Endothelial cell of umbilical vein (primary cell): ENCODE measurements at regions of chr11 and their contacts with region 1.

Region 1: DNA sequence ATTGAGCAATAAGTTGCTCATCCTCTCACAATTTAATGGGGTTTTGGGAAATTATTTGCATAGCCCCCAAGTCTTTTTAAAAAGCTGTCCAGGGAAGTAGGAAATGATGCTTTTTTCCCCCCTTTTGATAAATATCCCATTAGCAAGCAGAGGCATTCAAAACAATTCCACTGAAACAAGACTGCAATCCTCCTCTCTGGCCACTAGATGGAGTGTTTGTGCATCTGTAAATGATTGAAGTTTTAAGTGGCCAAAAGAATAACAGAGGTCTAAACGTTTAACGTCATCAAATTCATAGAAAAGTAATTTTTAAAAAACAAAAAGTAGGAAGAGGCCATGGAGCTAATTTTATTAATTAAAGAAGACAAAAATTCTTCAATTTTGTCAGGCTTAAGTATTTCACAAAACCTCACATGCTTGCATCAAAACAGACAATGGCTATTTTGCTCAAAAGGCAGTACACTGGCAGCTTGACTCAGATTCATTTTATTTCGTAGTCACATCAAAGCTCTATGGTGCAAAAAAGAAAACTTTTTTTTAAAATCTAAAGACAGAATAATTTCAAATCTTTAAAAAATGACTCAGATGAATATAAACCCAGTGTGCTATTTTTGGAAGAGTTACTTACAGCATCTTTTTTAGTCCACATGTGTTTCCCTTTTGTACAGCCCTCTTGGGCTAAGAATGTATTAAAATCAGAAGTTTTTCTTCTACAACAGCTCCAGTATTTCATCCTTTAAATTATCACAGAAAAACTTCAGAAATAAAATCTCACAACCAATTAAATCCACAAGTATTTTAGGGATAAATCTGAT is 17.8 kb downstream of the CHORDC1 start:
- DNase-seq: peak; percentile 68
- H3K4me3 ChIP-seq: no peak overlapping the region
- H3K27ac ChIP-seq: no peak overlapping the region
- H3K4me1 ChIP-seq: no peaks in the 10 kb centered on the region
- H3K27me3 ChIP-seq: no peaks in the 10 kb centered on the region
- CTCF ChIP-seq: peak; percentile 59 to 71
- POLR2A ChIP-seq: no peak

Region 2: DNA sequence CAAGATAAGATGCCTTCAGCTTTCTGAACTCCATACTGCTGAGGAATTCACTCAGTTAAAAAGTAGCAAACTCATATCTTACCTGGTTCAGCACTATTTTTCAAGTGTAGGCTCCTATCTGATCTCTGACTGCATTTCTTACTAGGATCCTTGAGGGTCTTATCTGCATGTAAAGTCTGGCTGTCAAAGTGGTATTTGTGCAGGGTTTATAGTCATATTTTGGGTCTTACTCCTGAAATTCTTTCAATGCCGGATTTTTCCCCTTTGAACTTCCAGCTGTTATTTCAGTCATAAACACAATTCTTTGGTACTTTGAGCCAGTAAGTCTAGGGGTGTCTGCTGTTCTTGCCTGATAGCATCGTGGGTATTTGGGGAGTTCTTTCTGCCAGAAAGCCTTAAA is 688.5 kb before region 1 on chr11:
- CTCF ChIA-PET with region 1: no interaction called
- POLR2A ChIA-PET with region 1: no interaction called
- dilution Hi-C with region 1: no loop called
- intact Hi-C with region 1: no loop called
- DNase-seq: no peak
- H3K4me3 ChIP-seq: no peak overlapping the region
- H3K27ac ChIP-seq: no peak overlapping the region
- H3K4me1 ChIP-seq: no peaks in the 10 kb centered on the region
- H3K27me3 ChIP-seq: no peaks in the 10 kb centered on the region
- CTCF ChIP-seq: no peak
- POLR2A ChIP-seq: no peak

Region 3: DNA sequence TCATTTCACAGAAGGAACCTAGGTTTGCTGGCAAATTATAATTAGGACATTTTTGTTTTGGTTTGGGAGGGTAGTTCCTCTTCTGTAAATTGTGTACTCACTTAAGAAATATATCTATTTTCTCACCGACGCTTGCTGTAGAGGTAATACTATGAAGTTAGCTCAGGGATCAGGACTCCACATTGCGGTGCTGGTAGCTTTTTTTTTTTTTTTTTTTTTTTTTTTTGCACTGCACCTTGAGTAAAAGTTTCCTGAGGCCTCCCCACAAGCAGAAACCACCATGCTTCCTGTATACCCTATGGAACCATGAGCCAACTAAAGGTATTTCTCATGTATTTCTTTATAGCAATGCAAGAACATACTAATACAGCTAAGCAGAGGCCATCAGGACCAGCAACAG is 104.6 kb before region 1 on chr11:
- CTCF ChIA-PET with region 1: no interaction called
- POLR2A ChIA-PET with region 1: no interaction called
- dilution Hi-C with region 1: no loop called
- intact Hi-C with region 1: no loop called
- DNase-seq: no peak
- H3K4me3 ChIP-seq: no peak overlapping the region
- H3K27ac ChIP-seq: no peak overlapping the region
- H3K4me1 ChIP-seq: no peaks in the 10 kb centered on the region
- H3K27me3 ChIP-seq: no peaks in the 10 kb centered on the region
- CTCF ChIP-seq: no peak
- POLR2A ChIP-seq: no peak

Region 4: GRCh38 chr11:90222459-90223247 is 17.6 kb after region 1 on chr11 and contains the start of gene CHORDC1:
- CTCF ChIA-PET with region 1: interaction called, 14 read pairs
- POLR2A ChIA-PET with region 1: no interaction called
- dilution Hi-C with region 1: no loop called
- intact Hi-C with region 1: no loop called
- DNase-seq: peak; percentile 89
- H3K4me3 ChIP-seq: peak within 1 kb of the TSS; percentile 77 to 90 (median 81)
- H3K27ac ChIP-seq: peak within 1 kb of the TSS; percentile 78
- H3K4me1 ChIP-seq: peaks cover 25% of the 10 kb centered on the region
- H3K27me3 ChIP-seq: no peaks in the 10 kb centered on the region
- CTCF ChIP-seq: no peak
- POLR2A ChIP-seq: peak; percentile 80
- total RNA-seq, gene CHORDC1: 55.4 and 56.8 TPM in 2 replicates

Region 5: GRCh38 chr11:90453525-90453924 is 248.5 kb after region 1 on chr11:
- CTCF ChIA-PET with region 1: no interaction called
- POLR2A ChIA-PET with region 1: no interaction called
- dilution Hi-C with region 1: no loop called
- intact Hi-C with region 1: loop called (anchors 2 kb)
- DNase-seq: no peak
- H3K4me3 ChIP-seq: no peak overlapping the region
- H3K27ac ChIP-seq: no peak overlapping the region
- H3K4me1 ChIP-seq: no peaks in the 10 kb centered on the region
- H3K27me3 ChIP-seq: no peaks in the 10 kb centered on the region
- CTCF ChIP-seq: no peak
- POLR2A ChIP-seq: no peak